Right cardiac atrium (tissue), 5 donors: ENCODE measurements at regions of chr5 and their contacts with region 1.

Region 1: GRCh38 chr5:121630402-121630801 is 221.3 kb upstream of the FTMT start:
- DNase-seq: no peak
- ATAC-seq: no peak
- H3K4me3 ChIP-seq: no peak overlapping the region
- H3K27ac ChIP-seq: no peak overlapping the region
- H3K4me1 ChIP-seq: no peaks in the 10 kb centered on the region
- H3K27me3 ChIP-seq: no peaks in the 10 kb centered on the region

Region 2: DNA sequence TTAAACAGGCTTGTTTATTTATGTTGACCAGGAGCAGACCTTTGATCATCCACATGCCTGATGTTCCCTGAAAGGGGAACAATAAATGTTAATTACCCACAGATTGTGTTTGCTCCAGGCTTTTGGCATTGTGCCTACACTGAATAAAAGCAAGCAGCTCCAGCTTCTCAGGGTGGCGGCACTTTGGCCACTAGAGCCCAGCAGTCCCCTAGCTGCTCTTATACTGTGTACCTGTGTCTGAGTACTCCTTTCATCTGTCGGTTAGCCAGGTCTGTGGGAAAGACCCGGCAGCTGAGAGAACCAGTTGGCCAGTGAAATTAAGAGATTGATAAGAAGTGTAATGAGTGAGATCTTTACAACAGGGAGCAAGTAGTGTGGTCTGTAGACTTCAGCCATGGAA is 33.5 kb before region 1 on chr5:
- intact Hi-C with region 1: no loop called
- DNase-seq: no peak
- ATAC-seq: no peak
- H3K4me3 ChIP-seq: no peak overlapping the region
- H3K27ac ChIP-seq: no peak overlapping the region
- H3K4me1 ChIP-seq: no peaks in the 10 kb centered on the region
- H3K27me3 ChIP-seq: no peaks in the 10 kb centered on the region

Region 3: GRCh38 chr5:121870489-121870888 is 240.1 kb after region 1 on chr5:
- intact Hi-C with region 1: loop called in 2 of 4 experiments (anchors 10 kb)
- DNase-seq: no peak
- ATAC-seq: no peak
- H3K4me3 ChIP-seq: no peak overlapping the region
- H3K27ac ChIP-seq: no peak overlapping the region
- H3K4me1 ChIP-seq: no peaks in the 10 kb centered on the region
- H3K27me3 ChIP-seq: no peaks in the 10 kb centered on the region